Activated CD4-positive, alpha-beta T cell treated with anti-CD3 and anti-CD28 coated beads for 36 hours (primary cell): ENCODE measurements at regions of chr20 and their contacts with region 1.

Region 1: DNA sequence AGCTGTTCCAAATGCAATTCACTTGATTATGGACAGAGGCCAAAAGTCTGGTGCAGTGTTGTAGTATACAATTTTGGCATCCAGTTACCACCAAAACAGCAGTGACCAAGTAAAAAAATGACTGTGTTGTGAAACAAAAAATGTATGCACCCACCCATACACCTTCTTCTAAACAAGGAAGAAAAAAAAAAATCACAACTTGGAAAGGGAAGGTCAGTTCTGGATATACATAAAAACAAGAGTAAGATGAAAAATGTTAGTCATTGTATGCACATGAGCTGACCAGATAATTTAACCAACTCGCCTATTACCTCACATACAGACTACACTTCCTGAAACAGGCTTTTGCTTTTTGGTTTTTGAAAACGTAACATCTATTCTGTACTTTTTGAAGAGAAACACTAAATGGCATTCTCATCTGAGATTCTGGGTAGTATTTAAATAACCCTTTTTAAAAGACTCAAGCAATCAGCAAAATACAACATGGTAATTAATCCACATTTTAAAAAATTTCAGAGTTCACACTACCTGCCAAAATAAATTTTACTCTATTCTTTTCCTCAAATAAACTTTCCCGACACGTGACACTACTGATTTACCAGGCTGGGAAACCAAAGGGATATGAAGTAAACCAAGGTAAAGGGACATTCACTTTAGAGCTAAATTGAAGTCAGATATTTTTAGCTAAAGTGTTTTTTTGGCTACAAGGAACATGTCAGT is 141.6 kb upstream of the SHLD1 start:
- DNase-seq: no peak
- ATAC-seq: no peak
- H3K4me3 Mint-ChIP-seq: peak overlapping the region; percentile 98
- H3K27ac Mint-ChIP-seq: peak overlapping the region; percentile 100
- H3K4me1 Mint-ChIP-seq: peaks cover 57% of the 10 kb centered on the region
- H3K27me3 Mint-ChIP-seq: no peaks in the 10 kb centered on the region

Region 2: GRCh38 chr20:5569021-5569420 is 39.6 kb before region 1 on chr20:
- CTCF ChIA-PET with region 1: interaction called, 11 read pairs
- POLR2A ChIA-PET with region 1: interaction called, 5 read pairs
- intact Hi-C with region 1: no loop called
- DNase-seq: peak; percentile 68
- ATAC-seq: peak; percentile 89
- H3K4me3 Mint-ChIP-seq: no peak overlapping the region
- H3K27ac Mint-ChIP-seq: peak overlapping the region; percentile 23
- H3K4me1 Mint-ChIP-seq: peaks cover 36% of the 10 kb centered on the region
- H3K27me3 Mint-ChIP-seq: no peaks in the 10 kb centered on the region

Region 3: DNA sequence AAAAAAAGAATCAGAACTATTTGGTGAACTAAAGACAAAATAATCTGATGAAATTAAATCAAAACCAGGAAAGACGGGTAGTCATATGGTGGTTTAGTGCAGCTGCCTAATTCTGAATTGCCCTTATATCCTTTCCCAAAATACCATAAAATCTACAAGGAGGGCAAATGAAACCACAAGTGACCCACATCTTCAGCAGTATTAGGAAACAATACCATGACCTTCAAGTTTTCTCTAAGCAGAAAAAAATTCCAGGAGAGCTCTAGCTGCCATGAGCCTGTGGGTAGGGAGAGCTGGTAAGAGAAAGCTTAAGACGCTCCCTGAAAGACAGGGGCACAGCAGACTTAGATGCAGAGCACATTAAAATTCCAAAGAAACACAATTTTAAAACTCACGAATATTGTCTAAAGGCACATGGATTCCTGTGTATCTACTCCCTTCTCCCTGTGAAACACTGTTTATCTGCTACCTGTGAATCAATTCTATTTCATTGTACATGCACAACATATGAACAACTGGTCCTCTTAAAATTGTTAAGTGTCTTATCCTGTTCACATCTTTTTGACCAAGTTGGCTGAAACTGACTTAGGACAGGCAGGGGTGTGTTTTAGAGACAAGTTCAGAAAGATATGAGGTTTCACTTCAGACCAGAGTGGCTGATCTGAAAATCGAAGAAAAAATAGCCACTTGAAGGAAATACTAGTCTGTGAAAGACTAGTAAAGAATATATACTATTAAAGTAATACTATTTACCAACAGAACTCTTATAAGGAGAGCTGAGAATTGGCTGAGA is 12.0 kb before region 1 on chr20:
- CTCF ChIA-PET with region 1: interaction called, 16 read pairs
- POLR2A ChIA-PET with region 1: interaction called, 17 read pairs
- intact Hi-C with region 1: loop called in 1 of 2 experiments (anchors 1 kb)
- DNase-seq: no peak
- ATAC-seq: no peak
- H3K4me3 Mint-ChIP-seq: no peak overlapping the region
- H3K27ac Mint-ChIP-seq: peak overlapping the region; percentile 37
- H3K4me1 Mint-ChIP-seq: peaks cover 62% of the 10 kb centered on the region
- H3K27me3 Mint-ChIP-seq: no peaks in the 10 kb centered on the region

Region 4: GRCh38 chr20:5642155-5642981 is 33.8 kb after region 1 on chr20:
- CTCF ChIA-PET with region 1: interaction called, 13 read pairs
- POLR2A ChIA-PET with region 1: no interaction called
- intact Hi-C with region 1: no loop called
- DNase-seq: no peak
- ATAC-seq: no peak
- H3K4me3 Mint-ChIP-seq: no peak overlapping the region
- H3K27ac Mint-ChIP-seq: no peak overlapping the region
- H3K4me1 Mint-ChIP-seq: peaks cover 43% of the 10 kb centered on the region
- H3K27me3 Mint-ChIP-seq: no peaks in the 10 kb centered on the region

Region 5: GRCh38 chr20:5674176-5674660 is 65.6 kb after region 1 on chr20:
- CTCF ChIA-PET with region 1: interaction called, 3 read pairs
- POLR2A ChIA-PET with region 1: no interaction called
- intact Hi-C with region 1: loop called (anchors 1 to 5 kb)
- DNase-seq: peak; percentile 42
- ATAC-seq: peak; percentile 93
- H3K4me3 Mint-ChIP-seq: no peak overlapping the region
- H3K27ac Mint-ChIP-seq: peak overlapping the region; percentile 76
- H3K4me1 Mint-ChIP-seq: peaks cover 14% of the 10 kb centered on the region
- H3K27me3 Mint-ChIP-seq: no peaks in the 10 kb centered on the region

Region 6: DNA sequence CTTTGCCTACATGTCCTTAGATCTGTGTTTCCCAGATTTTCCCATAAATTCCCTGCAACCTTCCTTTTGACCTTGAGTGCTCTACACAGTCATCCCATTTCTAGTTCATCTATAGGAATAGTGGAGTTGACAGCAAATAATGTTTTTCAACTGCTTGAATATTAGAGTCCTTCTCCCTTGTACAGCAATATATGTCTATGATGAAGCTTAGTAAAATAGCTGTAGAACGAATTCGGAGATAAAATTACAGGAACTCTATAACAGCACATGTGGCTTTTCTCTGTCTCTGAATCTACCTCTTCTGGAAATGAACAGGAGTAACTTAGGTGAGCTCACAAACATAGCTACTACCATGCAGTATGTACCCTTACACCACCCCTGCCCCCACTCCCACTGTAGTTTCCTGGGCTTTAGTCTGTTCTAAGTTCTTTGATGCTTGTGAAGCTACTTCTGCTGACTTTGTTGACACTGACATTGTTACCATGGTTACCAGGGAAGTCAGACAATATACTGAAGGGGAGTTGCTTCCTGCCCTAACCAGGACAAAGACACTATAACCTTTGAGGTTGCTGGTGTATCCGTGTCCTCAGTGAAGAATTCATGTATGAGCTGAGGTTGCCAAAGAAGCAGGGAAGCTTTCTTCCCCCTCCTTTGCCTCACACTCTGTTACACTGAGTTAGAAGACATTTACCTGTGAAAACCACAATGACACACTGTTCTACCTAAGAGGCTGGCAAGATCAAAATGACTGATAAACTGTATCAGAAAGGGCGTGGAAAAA is 105.8 kb after region 1 on chr20:
- CTCF ChIA-PET with region 1: interaction called, 4 read pairs
- POLR2A ChIA-PET with region 1: interaction called, 10 read pairs
- intact Hi-C with region 1: no loop called
- DNase-seq: peak; percentile 69
- ATAC-seq: peak; percentile 93
- H3K4me3 Mint-ChIP-seq: no peak overlapping the region
- H3K27ac Mint-ChIP-seq: peak overlapping the region; percentile 82
- H3K4me1 Mint-ChIP-seq: peaks cover 34% of the 10 kb centered on the region
- H3K27me3 Mint-ChIP-seq: no peaks in the 10 kb centered on the region

Region 7: DNA sequence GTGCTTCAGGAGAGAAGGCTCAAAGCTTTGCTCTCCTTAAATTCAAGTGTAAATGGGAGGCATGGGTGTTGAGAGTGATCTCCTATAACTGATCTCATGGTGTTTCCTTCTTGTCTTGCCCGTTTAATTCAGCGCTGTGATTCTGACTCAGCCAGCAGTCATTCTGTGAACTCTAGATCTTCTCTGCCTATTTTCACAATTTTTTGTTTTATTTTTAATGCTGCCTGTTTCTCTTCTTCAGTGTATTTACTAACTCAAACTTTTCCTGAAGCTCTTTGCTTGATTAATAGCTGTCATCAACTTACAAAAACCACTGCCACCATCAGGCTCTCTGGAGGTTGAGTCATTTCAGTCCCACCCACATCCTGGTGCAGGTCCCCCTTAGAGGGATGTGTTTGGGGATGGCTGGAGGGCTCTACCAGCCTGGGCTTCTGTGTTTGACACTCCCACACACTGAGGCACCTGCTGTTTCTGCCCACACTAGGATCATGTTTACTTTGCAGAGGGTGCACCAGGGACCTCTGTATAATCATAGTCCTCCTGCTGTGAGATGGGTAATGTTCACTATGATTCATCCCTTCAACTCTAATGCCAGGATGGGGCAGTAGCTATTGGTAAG is 235.6 kb after region 1 on chr20:
- CTCF ChIA-PET with region 1: interaction called, 11 read pairs
- POLR2A ChIA-PET with region 1: no interaction called
- intact Hi-C with region 1: no loop called
- DNase-seq: peak; percentile 83
- ATAC-seq: peak; percentile 92
- H3K4me3 Mint-ChIP-seq: peak overlapping the region; percentile 30
- H3K27ac Mint-ChIP-seq: peak overlapping the region; percentile 85
- H3K4me1 Mint-ChIP-seq: peaks cover 62% of the 10 kb centered on the region
- H3K27me3 Mint-ChIP-seq: no peaks in the 10 kb centered on the region